ENCODE measurements at regions of chr9 and their contacts with region 1.

Region 1: GRCh38 chr9:137200311-137201204 is at the start of gene TPRN:
- DNase-seq: peak; percentile 98
- H3K4me3 ChIP-seq: peak within 1 kb of the TSS; percentile 32 to 73 (median 68)
- H3K27ac ChIP-seq: peak within 1 kb of the TSS; percentile 17
- H3K4me1 ChIP-seq: peaks cover 50% of the 10 kb centered on the region
- H3K27me3 ChIP-seq: no peaks in the 10 kb centered on the region
- CTCF ChIP-seq: no peak
- total RNA-seq, gene TPRN: 4.0 to 10.5 TPM

Region 2: DNA sequence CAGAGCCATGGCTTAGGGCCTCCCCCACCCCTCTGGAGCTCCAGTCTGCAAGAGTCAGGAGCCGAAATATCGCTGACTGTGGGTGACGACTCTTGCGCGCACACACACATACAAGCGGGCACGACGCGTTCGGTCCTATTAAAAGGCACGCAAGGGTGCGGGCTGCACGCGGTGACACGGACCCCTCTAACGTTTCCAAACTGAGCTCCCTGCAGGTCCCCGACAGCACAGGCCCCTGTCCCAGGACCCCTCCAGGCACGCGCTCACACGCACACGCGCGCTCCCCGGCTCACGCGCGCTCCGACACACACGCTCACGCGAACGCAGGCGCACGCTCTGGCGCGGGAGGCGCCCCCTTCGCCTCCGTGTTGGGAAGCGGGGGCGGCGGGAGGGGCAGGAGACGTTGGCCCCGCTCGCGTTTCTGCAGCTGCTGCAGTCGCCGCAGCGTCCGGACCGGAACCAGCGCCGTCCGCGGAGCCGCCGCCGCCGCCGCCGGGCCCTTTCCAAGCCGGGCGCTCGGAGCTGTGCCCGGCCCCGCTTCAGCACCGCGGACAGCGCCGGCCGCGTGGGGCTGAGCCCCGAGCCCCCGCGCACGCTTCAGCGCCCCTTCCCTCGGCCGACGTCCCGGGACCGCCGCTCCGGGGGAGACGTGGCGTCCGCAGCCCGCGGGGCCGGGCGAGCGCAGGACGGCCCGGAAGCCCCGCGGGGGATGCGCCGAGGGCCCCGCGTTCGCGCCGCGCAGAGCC is 61.7 kb before region 1 on chr9 and contains the start of gene GRIN1:
- CTCF ChIA-PET with region 1: no interaction called
- dilution Hi-C with region 1: loop called (anchors 5 kb)
- in situ Hi-C with region 1: no loop called
- intact Hi-C with region 1: no loop called
- DNase-seq: no peak
- H3K4me3 ChIP-seq: no peak within 1 kb of the TSS
- H3K27ac ChIP-seq: no peak within 1 kb of the TSS
- H3K4me1 ChIP-seq: no peaks in the 10 kb centered on the region
- H3K27me3 ChIP-seq: peaks cover 13% of the 10 kb centered on the region
- CTCF ChIP-seq: no peak
- total RNA-seq, gene GRIN1: under 0.01 TPM in 1 of 2 donors, not detected in the other

Region 3: DNA sequence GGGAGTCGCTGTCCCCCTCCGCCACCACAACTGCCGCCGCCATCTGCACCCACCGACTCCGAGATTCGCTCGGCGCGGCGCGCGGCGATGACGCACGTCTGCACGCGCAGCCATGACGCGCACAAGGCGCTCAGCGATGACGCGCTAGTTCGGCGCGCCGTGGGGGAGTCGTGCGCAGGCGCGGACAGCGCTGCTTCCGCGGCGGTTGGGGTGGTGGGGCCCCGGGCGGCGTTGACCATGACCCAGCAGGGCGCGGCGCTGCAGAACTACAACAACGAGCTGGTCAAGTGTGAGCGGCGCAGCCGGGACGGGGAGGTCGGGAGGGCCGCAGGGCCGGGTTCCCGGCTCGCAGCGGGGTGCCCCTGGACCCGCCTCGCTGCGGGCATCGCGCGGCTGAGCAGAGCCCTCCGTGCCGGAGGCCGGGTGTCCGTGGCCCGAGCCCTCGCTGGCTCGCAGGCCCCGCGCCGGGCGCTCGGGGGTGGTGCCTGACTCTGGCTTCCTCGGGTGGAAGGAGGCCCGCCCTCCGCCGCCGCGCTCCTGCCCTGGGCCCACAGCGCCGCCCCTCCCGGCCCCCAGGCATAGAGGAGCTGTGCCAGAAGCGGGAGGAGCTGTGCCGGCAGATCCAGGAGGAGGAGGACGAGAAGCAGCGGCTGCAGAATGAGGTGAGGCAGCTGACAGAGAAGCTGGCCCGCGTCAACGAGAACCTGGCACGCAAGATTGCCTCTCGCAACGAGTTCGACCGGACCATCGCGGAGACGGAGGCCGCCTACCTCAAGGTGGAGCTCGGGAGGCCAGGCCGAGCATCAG is 11.9 kb before region 1 on chr9 and contains the starts of genes ANAPC2 and SSNA1:
- CTCF ChIA-PET with region 1: no interaction called
- dilution Hi-C with region 1: no loop called
- in situ Hi-C with region 1: no loop called
- intact Hi-C with region 1: loop called (anchors 1 kb)
- DNase-seq: peak; percentile 91
- H3K4me3 ChIP-seq: peak within 1 kb of the TSS; percentile 87 to 98 (median 92)
- H3K27ac ChIP-seq: peak within 1 kb of the TSS; percentile 71
- H3K4me1 ChIP-seq: peaks cover 28% of the 10 kb centered on the region
- H3K27me3 ChIP-seq: no peaks in the 10 kb centered on the region
- CTCF ChIP-seq: peak in 1 of 2 donors; percentile 60
- total RNA-seq, gene ANAPC2: 15.5 to 45.3 TPM
- total RNA-seq, gene SSNA1: 36.2 to 70.2 TPM

Region 4: GRCh38 chr9:137236238-137236935 is 35.8 kb after region 1 on chr9:
- CTCF ChIA-PET with region 1: no interaction called
- dilution Hi-C with region 1: no loop called
- in situ Hi-C with region 1: no loop called
- intact Hi-C with region 1: loop called (anchors 2 kb)
- DNase-seq: peak; percentile 55
- H3K4me3 ChIP-seq: no peak overlapping the region
- H3K27ac ChIP-seq: no peak overlapping the region
- H3K4me1 ChIP-seq: peaks cover 27% of the 10 kb centered on the region
- H3K27me3 ChIP-seq: no peaks in the 10 kb centered on the region
- CTCF ChIP-seq: peak; percentile 91 to 95

Region 5: DNA sequence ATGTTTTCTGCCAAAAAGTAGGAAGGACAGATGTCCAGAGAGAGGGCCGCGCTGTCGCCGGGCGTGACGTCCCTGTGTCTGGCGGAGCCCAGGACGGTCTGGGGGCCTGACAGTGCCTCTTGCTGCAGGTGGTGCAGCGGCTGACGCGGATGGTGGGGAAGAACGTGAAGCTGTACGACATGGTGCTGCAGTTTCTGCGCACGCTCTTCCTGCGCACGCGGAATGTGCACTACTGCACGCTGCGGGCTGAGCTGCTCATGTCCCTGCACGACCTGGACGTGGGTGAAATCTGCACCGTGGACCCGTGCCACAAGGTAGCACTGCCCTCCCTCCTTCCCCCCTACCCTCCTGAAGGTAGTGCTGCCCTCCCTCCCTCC is 62.3 kb after region 1 on chr9:
- CTCF ChIA-PET with region 1: no interaction called
- dilution Hi-C with region 1: no loop called
- in situ Hi-C with region 1: no loop called
- intact Hi-C with region 1: loop called (anchors 2 kb)
- DNase-seq: no peak
- H3K4me3 ChIP-seq: no peak overlapping the region
- H3K27ac ChIP-seq: no peak overlapping the region
- H3K4me1 ChIP-seq: no peaks in the 10 kb centered on the region
- H3K27me3 ChIP-seq: no peaks in the 10 kb centered on the region
- CTCF ChIP-seq: no peak

Region 6: DNA sequence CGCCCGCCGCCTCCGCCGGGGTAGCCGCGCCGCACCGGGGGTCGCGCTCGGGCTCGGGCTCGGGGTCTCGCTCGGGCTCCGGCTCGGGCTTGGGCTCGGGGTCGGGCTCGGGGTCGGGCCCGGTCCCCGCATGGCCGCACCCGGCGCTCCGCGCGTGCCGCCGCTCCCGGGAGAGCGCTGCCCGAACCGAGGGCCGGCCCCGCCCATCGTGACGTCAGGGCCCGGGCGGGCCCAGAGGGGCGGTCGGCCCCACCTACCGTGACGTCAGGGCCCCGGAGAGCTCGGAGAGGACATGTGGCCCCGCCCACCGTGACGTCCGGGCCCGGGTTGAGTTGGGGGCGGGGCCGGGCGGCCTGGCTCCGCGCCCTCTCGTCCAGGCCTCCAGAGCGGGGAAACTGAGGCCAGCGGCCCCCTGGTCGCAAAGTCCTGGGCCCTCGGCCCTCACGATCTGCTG is 258.6 kb after region 1 on chr9 and contains the start of gene NSMF:
- CTCF ChIA-PET with region 1: no interaction called
- dilution Hi-C with region 1: no loop called
- in situ Hi-C with region 1: no loop called
- intact Hi-C with region 1: no loop called
- DNase-seq: peak; percentile 84
- H3K4me3 ChIP-seq: peak within 1 kb of the TSS; percentile 44 to 91 (median 79)
- H3K27ac ChIP-seq: peak within 1 kb of the TSS; percentile 41
- H3K4me1 ChIP-seq: peaks cover 15% of the 10 kb centered on the region
- H3K27me3 ChIP-seq: no peaks in the 10 kb centered on the region
- CTCF ChIP-seq: no peak
- total RNA-seq, gene NSMF: 29.7 to 42.0 TPM